CD8-positive, alpha-beta T cell (primary cell): ENCODE measurements at regions of chr9 and their contacts with region 1.

Region 1: DNA sequence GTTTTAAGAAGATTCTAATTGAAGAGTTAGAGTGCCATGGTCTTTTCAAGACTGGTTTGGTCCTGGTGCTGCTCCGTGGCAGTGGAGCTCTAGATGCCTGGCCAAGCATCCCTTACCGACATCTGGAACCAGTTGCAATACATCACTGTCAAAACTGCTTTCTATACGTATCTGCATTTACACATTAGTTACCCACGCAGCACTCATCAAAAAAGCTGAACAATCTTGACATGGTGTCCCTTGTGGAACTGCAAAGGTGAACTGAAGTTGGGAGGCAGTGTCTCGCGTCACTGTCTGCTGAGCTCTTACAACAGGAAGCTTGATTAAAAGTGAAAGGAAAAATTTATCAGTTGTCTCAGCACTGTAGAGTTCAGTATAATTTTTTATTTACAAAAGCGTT is 82.6 kb downstream of the PBX3 start:
- DNase-seq: peak; percentile 16 to 86 (median 60)
- ATAC-seq: peak; percentile 97
- H3K4me3 ChIP-seq: peak overlapping the region; percentile 45 to 46
- H3K4me3 Mint-ChIP-seq: peak overlapping the region; percentile 83
- H3K27ac ChIP-seq: peak overlapping the region; percentile 58 to 73
- H3K27ac Mint-ChIP-seq: peak overlapping the region; percentile 95
- H3K4me1 ChIP-seq: peaks cover 13% of the 10 kb centered on the region
- H3K4me1 Mint-ChIP-seq: peaks cover 44% of the 10 kb centered on the region
- H3K27me3 ChIP-seq: no peaks in the 10 kb centered on the region
- H3K27me3 Mint-ChIP-seq: no peaks in the 10 kb centered on the region
- CTCF ChIP-seq: no peak

Region 2: DNA sequence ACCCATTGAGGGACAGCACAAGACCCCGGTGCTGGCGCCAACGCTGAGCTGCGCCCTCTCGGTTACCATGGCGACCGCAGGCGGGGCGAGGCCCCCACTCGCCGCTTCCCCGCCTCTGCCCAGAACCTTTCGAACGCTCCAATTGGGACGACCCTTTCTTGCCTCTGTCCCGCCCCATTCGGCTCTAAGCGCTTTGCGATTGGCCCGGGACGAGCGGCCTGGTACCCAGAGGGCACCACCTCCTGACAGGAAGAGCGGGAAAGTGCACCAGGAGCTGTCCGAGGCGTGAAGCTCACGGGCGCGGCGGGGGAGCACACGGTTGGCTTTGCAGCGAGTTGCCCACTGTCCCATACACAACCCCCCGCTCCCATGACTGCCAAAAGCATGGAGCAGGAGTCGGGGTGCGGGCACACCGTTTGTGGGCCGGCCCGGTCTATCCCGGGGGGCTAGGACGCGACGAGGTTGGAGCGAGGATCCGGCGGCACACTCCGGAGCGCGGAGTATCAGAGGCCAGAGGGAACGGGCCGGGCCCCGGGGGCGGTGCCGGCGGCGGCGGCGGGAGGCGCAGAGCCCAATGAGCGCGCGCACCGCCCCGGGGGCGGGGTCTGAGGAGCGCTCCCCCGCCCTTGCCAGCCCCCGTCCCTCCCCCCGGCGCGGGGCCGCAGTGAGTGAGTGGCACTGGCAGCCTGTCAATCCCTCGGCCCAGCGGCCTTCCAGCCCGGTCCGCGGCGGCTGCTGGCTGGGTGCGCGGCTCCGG is 83.5 kb before region 1 on chr9:
- CTCF ChIA-PET with region 1: no interaction called
- POLR2A ChIA-PET with region 1: no interaction called
- intact Hi-C with region 1: loop called (anchors 2 kb)
- DNase-seq: peak; percentile 74 to 96 (median 92)
- ATAC-seq: peak; percentile 85
- H3K4me3 ChIP-seq: peak overlapping the region; percentile 74 to 91
- H3K4me3 Mint-ChIP-seq: peak overlapping the region; percentile 98
- H3K27ac ChIP-seq: peak overlapping the region; percentile 7 to 56
- H3K27ac Mint-ChIP-seq: peak overlapping the region; percentile 88
- H3K4me1 ChIP-seq: peaks cover 11% of the 10 kb centered on the region
- H3K4me1 Mint-ChIP-seq: peaks cover 29% of the 10 kb centered on the region
- H3K27me3 ChIP-seq: no peaks in the 10 kb centered on the region
- H3K27me3 Mint-ChIP-seq: no peaks in the 10 kb centered on the region
- CTCF ChIP-seq: no peak

Region 3: DNA sequence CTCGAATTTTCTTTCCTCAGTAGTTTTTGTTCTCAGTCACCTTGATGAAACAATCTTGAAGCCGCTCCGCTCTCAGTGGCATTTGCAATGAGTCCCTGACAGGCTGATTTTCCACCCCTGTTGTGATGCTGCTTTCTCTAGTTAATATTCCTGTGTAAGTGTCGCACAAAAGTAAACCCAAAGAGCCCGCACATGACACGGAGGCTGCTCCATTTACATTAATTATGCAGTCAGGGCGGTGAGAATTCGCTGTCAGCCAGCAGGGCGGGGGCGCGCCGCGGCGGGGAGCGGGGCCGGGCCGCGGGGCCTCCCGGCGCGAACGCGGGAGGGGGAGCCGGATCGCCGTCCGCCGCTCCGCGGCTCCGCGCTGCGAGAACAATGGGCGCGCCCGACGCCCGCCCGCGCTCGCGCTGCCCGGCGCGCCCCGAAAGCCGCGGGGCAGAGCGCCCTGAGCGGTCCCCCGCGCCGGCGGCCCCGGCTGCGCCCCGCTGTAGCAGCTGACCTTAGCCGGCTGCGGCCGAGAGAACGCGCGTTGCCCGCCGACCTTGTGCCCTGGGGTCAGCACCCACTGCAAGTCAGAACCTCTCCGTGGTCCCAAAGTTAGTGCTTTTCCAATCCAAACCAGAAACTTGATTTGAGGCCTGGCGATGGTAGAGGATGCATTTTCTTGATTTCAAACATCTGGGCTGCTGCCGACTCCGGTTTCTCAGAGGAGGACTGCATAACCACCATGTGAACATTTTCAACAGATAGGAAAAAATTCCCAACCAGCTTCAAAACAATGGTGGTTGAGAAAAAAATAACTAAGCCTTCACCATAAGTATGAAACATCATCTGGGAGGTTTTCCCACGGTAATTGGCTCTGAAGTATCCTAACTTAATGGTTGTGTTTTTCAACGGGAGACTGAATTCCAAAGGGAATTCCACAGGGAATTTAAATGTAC is 60.0 kb after region 1 on chr9:
- CTCF ChIA-PET with region 1: no interaction called
- POLR2A ChIA-PET with region 1: no interaction called
- intact Hi-C with region 1: loop called in 1 of 2 experiments (anchors 5 kb)
- DNase-seq: peak in 8 of 9 experiments; percentile 6 to 61 (median 40)
- ATAC-seq: peak; percentile 84
- H3K4me3 ChIP-seq: peak overlapping the region; percentile 37 to 56
- H3K4me3 Mint-ChIP-seq: peak overlapping the region; percentile 81
- H3K27ac ChIP-seq: no peak overlapping the region
- H3K27ac Mint-ChIP-seq: no peak overlapping the region
- H3K4me1 ChIP-seq: peaks cover 5% of the 10 kb centered on the region
- H3K4me1 Mint-ChIP-seq: peaks cover 12% of the 10 kb centered on the region
- H3K27me3 ChIP-seq: peaks cover 3 to 4% of the 10 kb centered on the region in 2 experiments
- H3K27me3 Mint-ChIP-seq: peaks cover 24% of the 10 kb centered on the region
- CTCF ChIP-seq: no peak